Gastrocnemius medialis (tissue), 4 donors: ENCODE measurements at regions of chr2 and their contacts with region 1.

Region 1: DNA sequence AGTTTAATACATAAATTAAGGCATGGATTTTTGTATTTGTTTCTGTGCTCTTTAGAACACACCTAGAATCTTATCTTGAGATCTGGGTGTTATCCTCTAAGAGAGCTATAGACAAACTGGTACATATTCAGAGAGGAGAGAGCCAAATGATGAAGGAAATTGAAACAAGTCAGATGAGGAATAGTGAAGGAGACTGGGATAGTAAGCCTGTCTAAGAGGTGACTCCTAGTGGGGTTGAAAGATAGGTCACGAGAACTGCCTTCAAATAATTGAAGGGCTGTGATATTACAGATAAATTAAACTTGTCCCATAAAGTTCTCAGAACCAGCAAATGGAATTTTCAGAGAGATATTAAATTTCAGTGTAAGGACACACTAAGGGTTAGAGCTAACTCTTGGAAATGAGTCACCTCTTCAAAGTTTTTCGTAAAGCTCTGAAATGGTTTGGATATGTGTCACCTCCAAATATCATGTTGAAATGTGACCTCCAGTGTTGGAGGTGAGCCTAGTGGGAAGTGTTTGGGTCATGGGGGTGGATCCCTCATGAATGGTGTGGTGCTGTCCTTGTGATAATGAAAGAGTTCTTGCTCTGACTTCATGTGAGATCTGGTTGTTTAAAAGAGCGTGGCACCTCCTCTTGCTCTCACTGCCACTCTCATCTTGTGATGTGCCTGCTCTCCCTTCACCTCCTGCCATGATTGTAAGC is 87.2 kb downstream of the BABAM2 start:
- DNase-seq: peak; percentile 75 to 87
- ATAC-seq: peak; percentile 95 to 96
- H3K4me3 ChIP-seq: peak overlapping the region in 1 of 4 donors; percentile 25
- H3K27ac ChIP-seq: peak overlapping the region; percentile 73 to 85 (median 82)
- H3K4me1 ChIP-seq: peaks cover 11 to 20% of the 10 kb centered on the region in 2 donors
- H3K27me3 ChIP-seq: no peaks in the 10 kb centered on the region
- CTCF ChIP-seq: peak in 1 of 5 experiments; percentile 27
- POLR2A ChIP-seq: peak; percentile 34 to 63

Region 2: DNA sequence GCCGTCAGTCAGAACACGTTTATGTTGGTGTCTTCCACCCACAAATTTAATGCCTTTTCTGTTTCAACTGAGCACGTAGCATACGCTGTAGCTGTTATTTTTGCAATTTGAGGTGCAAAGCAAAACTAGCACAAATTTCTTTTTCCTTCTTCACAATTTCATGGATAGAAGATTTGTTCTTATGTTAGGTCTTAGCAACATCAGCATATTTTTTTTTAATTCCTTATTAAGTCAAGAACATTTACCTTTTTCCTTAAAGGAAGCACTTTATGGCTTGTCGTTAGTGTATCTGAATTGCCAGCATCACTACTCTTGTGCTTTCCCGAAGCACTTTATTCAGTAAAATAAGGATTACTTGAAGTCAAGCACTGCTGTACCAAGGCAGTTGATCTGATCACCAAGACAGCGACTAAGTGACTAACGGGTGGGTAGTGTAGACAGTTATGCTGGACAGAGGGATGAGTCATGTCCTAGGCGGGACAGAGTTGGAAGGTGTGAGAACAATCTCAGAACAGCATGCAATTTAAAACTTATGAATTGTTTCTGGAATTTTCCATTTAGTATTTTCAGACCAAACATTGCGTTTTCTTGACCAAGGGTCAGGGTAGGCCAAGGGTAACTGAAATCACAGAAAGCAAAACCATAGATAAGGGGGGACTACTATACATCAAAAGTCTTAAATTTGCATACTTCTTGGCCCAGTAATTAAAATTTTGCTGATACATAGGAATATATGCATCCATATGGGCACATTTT is 73.9 kb before region 1 on chr2:
- in situ Hi-C with region 1: no loop called
- intact Hi-C with region 1: loop called (anchors 5 kb)
- DNase-seq: peak in 1 of 2 donors; percentile 34
- ATAC-seq: peak; percentile 35 to 50
- H3K4me3 ChIP-seq: no peak overlapping the region
- H3K27ac ChIP-seq: peak overlapping the region; percentile 74 to 86 (median 80)
- H3K4me1 ChIP-seq: peaks cover 42 to 46% of the 10 kb centered on the region in 2 donors
- H3K27me3 ChIP-seq: no peaks in the 10 kb centered on the region
- CTCF ChIP-seq: no peak
- POLR2A ChIP-seq: no peak

Region 3: GRCh38 chr2:28201671-28202180 is 224.0 kb after region 1 on chr2:
- in situ Hi-C with region 1: no loop called
- intact Hi-C with region 1: loop called (anchors 5 kb)
- DNase-seq: peak; percentile 85 to 93
- ATAC-seq: peak; percentile 92 to 94
- H3K4me3 ChIP-seq: no peak overlapping the region
- H3K27ac ChIP-seq: peak overlapping the region; percentile 75 to 87 (median 82)
- H3K4me1 ChIP-seq: peaks cover 25 to 38% of the 10 kb centered on the region in 2 donors
- H3K27me3 ChIP-seq: no peaks in the 10 kb centered on the region
- CTCF ChIP-seq: no peak
- POLR2A ChIP-seq: peak; percentile 47 to 64

Region 4: GRCh38 chr2:28398101-28398834 is 420.5 kb after region 1 on chr2:
- in situ Hi-C with region 1: no loop called
- intact Hi-C with region 1: loop called (anchors 2 kb)
- DNase-seq: peak; percentile 75 to 79
- ATAC-seq: peak; percentile 35 to 45
- H3K4me3 ChIP-seq: peak overlapping the region; percentile 76 to 97 (median 88)
- H3K27ac ChIP-seq: peak overlapping the region; percentile 98 to 100 (median 99)
- H3K4me1 ChIP-seq: peaks cover 59% of the 10 kb centered on the region in 2 donors
- H3K27me3 ChIP-seq: no peaks in the 10 kb centered on the region
- CTCF ChIP-seq: no peak
- POLR2A ChIP-seq: peak; percentile 58 to 73